ENCODE measurements at regions of chr2 and their contacts with region 1.

Region 1: DNA sequence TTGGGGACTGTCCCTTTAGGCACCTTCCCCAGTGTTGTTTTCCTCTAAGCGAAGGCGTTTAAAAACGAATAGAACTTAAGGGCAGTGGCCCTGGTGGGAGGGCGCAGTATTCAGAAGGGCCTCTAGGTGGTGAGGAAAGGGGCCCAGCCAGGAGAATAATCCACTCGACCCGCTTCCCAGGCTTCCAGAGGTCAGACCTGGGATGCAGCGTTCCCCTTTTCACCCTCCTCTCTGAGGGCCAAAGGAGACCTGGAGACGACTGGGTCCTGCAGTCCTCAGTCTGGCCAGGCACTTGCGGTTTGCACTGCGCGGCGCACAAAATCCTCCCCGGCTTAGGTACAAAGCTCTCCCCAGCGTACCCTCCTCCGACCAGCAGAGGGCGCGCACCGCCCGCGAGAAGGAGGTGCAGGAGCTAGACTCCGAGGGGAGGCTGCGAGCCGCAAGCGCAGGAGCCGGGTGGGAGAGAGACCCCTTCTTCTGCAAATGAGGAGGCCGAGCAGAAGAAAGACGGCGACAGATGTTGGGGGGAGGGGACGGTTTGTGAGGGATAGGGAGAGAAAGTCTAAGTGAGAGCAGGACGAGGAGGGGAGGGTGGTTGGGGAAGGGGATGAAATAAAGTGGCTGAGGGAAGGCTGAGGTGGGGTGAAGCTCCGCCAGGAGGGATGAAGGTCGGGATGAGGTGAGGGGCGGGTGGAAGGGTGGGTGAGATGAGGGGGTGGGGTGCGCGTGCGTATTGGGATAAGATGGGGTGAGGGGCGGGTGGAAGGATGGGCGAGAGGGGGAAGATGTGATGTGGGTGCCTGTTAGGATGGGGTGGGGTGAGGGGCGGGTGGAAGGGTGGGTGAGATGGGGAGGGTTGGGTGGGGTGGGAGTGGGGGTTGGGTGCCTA is 4.9 kb downstream of the FEV start:
- DNase-seq: peak; percentile 89
- H3K4me3 Mint-ChIP-seq: peak overlapping the region; percentile 52
- H3K27ac Mint-ChIP-seq: no peak overlapping the region
- H3K4me1 Mint-ChIP-seq: peaks cover 28% of the 10 kb centered on the region
- H3K27me3 Mint-ChIP-seq: peaks cover 62% of the 10 kb centered on the region

Region 2: DNA sequence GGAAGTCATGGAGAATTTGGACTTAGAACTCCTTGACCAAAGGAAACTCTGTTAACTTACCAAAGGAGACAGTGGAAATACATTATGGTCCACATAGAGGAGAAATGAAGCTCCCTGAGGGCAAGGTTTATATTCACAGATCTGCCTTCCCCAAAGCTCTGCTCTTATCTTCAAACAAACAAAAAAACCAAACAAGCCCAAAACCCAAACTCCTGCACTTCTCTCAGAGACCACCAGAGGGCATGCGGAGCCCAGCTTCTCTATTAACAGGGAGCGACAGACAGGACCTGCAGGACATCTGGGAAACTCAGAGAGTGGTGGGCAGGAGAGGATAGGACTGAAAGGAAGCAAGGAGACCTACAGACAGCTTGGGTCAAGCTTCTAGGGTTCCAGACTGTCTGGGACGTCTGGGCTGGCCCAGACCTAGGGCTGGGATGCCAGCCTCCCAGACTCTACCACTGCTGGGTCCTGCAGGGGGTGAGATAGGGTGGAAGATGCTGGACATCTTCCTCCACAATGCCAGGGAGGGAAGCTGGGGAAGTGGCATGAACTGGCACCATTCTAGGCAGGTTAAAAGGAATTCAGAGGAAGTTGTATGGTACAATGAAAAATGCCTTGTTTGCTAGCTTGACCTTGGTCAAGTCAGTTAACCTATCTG is 103.4 kb before region 1 on chr2:
- CTCF ChIA-PET with region 1: interaction called, 25 read pairs
- POLR2A ChIA-PET with region 1: no interaction called
- intact Hi-C with region 1: loop called (anchors 5 kb)
- DNase-seq: peak; percentile 82
- H3K4me3 Mint-ChIP-seq: no peak overlapping the region
- H3K27ac Mint-ChIP-seq: peak overlapping the region; percentile 3
- H3K4me1 Mint-ChIP-seq: peaks cover 38% of the 10 kb centered on the region
- H3K27me3 Mint-ChIP-seq: peaks cover 32% of the 10 kb centered on the region

Region 3: DNA sequence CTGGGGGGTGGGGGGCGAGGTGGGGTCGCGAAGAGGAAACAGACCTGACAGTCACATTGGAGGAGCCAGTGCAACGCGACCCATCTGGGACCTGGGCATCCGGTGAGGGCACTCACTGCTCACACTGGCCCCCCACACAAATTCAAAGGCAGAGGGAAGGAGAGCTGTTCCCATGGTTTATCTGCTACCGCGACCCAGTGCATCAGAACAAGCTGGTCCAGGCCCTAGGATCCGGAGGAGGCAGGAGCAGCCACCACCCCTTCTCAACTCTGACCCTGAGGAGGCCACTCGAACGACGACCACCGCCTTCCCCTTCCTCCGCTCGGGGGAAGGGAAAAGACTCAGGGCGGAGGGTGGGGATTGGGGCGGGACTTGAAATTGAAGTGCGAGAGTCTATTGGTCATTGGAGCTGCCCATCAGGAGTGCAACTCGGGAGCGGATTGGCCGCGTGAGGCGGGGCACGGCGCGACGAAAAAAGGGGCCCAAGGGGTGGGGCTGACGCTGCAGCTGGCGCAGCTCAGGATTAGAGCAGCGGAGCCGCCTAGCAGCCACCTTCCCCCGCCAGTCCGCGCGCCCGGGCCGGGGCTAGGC is 20.9 kb before region 1 on chr2 and contains the start of gene CDK5R2:
- CTCF ChIA-PET with region 1: interaction called, 9 read pairs
- POLR2A ChIA-PET with region 1: no interaction called
- intact Hi-C with region 1: loop called (anchors 2 kb)
- DNase-seq: peak; percentile 85
- H3K4me3 Mint-ChIP-seq: peak within 1 kb of the TSS; percentile 48
- H3K27ac Mint-ChIP-seq: no peak within 1 kb of the TSS
- H3K4me1 Mint-ChIP-seq: peaks cover 14% of the 10 kb centered on the region
- H3K27me3 Mint-ChIP-seq: peaks cover 65% of the 10 kb centered on the region
- total RNA-seq, gene CDK5R2: not detected

Region 4: GRCh38 chr2:218995972-218996711 is 16.1 kb after region 1 on chr2:
- CTCF ChIA-PET with region 1: interaction called, 111 read pairs
- POLR2A ChIA-PET with region 1: no interaction called
- intact Hi-C with region 1: no loop called
- DNase-seq: peak; percentile 86
- H3K4me3 Mint-ChIP-seq: no peak overlapping the region
- H3K27ac Mint-ChIP-seq: no peak overlapping the region
- H3K4me1 Mint-ChIP-seq: peaks cover 2% of the 10 kb centered on the region
- H3K27me3 Mint-ChIP-seq: peaks cover 73% of the 10 kb centered on the region

Region 5: DNA sequence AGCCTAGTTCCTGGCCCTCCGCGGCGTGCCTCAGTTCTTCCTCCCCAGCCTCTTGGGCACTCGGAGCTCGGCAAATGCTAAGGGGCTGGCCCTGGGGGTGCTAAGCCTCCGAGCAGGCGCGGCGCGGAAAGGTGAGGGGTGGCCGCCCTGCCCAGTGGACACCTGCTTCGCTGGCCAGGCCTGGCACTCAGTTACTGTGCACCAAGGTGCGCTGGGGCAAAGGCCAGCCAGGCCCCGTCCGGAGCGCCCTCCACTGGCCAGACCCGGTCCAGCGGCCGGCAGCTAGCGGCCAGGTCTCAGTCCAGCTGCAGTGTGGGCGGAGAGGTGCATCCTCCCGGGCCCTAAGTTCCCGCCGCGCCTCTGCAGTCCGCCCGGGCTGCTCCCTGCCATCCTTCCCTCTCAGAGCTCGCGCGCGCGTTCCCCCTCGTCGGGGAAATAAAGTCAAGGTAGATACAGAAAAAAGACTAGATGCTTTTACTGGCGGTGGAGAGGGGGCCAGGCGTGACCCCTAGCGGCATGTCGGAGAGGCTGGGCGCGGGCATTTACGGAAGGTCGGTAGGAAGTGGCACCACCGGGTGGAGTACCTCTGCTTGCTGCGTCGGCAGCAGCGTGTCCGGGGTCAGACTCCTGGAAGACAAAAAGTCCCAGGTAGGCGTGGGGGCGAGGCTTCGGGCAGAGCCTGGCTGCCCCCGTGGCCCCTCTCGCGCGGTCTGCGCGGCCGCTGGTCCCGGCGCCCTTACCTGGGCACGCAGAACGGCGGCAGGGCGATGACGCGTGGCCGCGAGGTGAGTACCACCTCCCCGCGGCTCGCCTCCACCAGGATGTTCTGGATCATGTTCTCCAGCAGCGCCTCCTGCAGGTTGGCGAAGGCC is 22.5 kb after region 1 on chr2:
- CTCF ChIA-PET with region 1: interaction called, 20 read pairs
- POLR2A ChIA-PET with region 1: interaction called, 4 read pairs
- intact Hi-C with region 1: loop called (anchors 1 kb)
- DNase-seq: peak; percentile 77
- H3K4me3 Mint-ChIP-seq: peak overlapping the region; percentile 33
- H3K27ac Mint-ChIP-seq: no peak overlapping the region
- H3K4me1 Mint-ChIP-seq: peaks cover 9% of the 10 kb centered on the region
- H3K27me3 Mint-ChIP-seq: peaks cover 66% of the 10 kb centered on the region

Region 6: GRCh38 chr2:219155054-219155644 is 175.1 kb after region 1 on chr2:
- CTCF ChIA-PET with region 1: interaction called, 14 read pairs
- POLR2A ChIA-PET with region 1: no interaction called
- intact Hi-C with region 1: no loop called
- DNase-seq: peak; percentile 31
- H3K4me3 Mint-ChIP-seq: no peak overlapping the region
- H3K27ac Mint-ChIP-seq: no peak overlapping the region
- H3K4me1 Mint-ChIP-seq: peaks cover 8% of the 10 kb centered on the region
- H3K27me3 Mint-ChIP-seq: no peaks in the 10 kb centered on the region